CD14-positive monocyte (primary cell): ENCODE measurements at regions of chr17 and their contacts with region 1.

Region 1: DNA sequence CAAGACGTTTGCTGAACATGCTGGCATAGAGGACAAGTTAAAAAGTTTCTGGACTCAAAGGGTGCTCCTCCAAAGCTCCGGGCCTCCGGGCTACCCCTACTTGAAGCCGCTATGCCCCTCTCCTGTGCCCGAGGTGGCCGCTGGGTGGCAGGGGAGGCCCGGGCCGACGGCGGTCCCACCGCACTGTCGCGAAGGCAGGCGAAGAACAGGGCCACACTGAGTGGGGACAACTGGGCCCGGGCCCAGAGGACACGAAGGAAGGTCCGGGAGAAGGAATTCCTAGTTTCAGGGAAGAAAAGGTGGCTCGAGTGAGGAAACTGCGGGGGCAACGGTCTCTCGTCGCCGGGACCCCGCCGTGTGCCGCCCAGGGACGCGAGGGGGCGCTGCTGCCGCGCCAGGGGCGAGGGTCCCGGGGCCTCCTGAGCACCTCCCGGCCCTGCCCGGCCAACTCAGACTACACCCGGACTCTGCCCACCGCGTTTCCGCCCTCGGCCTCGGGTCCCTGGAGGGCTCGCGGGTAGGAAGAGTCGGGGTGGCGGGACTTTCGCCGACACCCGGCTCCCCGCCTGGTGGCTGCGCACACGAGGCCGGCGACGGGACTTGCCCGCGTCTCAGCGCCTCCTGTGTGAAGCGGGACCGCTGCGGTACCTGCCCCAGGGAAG is 885 bp upstream of the CHCT1 start:
- DNase-seq: peak; percentile 62 to 70 (median 66)
- H3K4me3 ChIP-seq: peak overlapping the region; percentile 57 to 81 (median 69)
- H3K4me3 Mint-ChIP-seq: peak overlapping the region; percentile 81 to 95
- H3K27ac ChIP-seq: peak overlapping the region in 1 of 2 donors; percentile 92
- H3K27ac Mint-ChIP-seq: peak overlapping the region in 6 of 7 donors; percentile 76 to 94 (median 91)
- H3K4me1 ChIP-seq: peaks cover 10 to 16% of the 10 kb centered on the region in 2 donors
- H3K4me1 Mint-ChIP-seq: peaks cover 18% of the 10 kb centered on the region
- H3K27me3 ChIP-seq: no peaks in the 10 kb centered on the region
- H3K27me3 Mint-ChIP-seq: peaks cover 0 to 3% (median 0%) of the 10 kb centered on the region in 3 donors
- CTCF ChIP-seq: peak; percentile 100

Region 2: GRCh38 chr17:60361889-60362288 is 59.5 kb before region 1 on chr17:
- intact Hi-C with region 1: loop called in 1 of 2 experiments (anchors 10 kb)
- DNase-seq: no peak
- H3K4me3 ChIP-seq: no peak overlapping the region
- H3K4me3 Mint-ChIP-seq: no peak overlapping the region
- H3K27ac ChIP-seq: no peak overlapping the region
- H3K27ac Mint-ChIP-seq: no peak overlapping the region
- H3K4me1 ChIP-seq: peaks cover 24 to 34% of the 10 kb centered on the region in 2 donors
- H3K4me1 Mint-ChIP-seq: peaks cover 31% of the 10 kb centered on the region
- H3K27me3 ChIP-seq: no peaks in the 10 kb centered on the region
- H3K27me3 Mint-ChIP-seq: no peaks in the 10 kb centered on the region
- CTCF ChIP-seq: no peak

Region 3: DNA sequence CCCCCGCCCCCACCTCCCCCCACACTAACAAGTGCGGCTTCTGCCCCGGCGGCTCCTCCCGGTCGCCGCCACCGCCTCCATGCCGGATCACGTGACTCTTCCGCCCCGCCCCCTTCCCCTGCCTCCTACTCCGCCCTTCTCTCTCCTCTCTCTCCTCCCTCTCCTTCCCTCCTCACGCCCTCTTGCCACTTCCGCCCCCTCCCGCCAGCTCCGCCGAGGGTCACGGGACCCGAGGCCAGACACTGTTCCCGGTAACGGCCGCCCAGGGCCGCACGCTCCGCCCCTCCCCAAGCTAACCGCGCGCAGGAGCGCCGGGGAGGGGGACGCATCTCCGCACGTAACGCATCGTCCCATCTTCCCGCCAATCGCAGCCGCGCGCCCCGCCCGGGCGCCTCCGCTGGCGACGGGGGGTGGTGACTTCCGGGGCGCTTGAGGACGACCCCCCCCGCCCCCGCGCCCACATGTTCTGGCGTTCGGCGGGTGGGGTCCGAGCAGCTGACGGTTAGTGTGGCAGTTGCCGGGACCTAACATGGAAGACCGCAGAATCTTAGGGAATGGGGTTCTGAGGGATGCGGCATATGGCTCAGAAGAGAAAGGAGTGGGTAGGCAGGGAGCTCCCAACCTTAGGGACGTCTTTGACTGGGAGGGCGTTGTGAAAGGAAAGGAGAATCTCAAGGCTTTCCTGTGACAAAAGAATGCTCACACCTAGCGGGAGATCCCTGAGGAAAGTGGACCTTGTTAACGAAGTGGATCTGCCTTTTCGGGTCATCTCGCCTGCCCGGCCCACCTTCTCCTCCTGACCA is 29.2 kb before region 1 on chr17 and contains the start of gene USP32:
- intact Hi-C with region 1: no loop called
- DNase-seq: peak; percentile 93 to 99 (median 96)
- H3K4me3 ChIP-seq: peak within 1 kb of the TSS; percentile 42 to 91 (median 83)
- H3K4me3 Mint-ChIP-seq: peak within 1 kb of the TSS; percentile 97 to 99
- H3K27ac ChIP-seq: peak within 1 kb of the TSS; percentile 89 to 92
- H3K27ac Mint-ChIP-seq: peak within 1 kb of the TSS; percentile 98 to 100 (median 99)
- H3K4me1 ChIP-seq: peaks cover 69 to 77% of the 10 kb centered on the region in 2 donors
- H3K4me1 Mint-ChIP-seq: peaks cover 76% of the 10 kb centered on the region
- H3K27me3 ChIP-seq: no peaks in the 10 kb centered on the region
- H3K27me3 Mint-ChIP-seq: no peaks in the 10 kb centered on the region
- CTCF ChIP-seq: peak; percentile 25
- polyA plus RNA-seq, gene USP32: 10.1 to 26.6 (median 16.6) TPM